ENCODE measurements at regions of chr11 and their contacts with region 1.

Region 1: DNA sequence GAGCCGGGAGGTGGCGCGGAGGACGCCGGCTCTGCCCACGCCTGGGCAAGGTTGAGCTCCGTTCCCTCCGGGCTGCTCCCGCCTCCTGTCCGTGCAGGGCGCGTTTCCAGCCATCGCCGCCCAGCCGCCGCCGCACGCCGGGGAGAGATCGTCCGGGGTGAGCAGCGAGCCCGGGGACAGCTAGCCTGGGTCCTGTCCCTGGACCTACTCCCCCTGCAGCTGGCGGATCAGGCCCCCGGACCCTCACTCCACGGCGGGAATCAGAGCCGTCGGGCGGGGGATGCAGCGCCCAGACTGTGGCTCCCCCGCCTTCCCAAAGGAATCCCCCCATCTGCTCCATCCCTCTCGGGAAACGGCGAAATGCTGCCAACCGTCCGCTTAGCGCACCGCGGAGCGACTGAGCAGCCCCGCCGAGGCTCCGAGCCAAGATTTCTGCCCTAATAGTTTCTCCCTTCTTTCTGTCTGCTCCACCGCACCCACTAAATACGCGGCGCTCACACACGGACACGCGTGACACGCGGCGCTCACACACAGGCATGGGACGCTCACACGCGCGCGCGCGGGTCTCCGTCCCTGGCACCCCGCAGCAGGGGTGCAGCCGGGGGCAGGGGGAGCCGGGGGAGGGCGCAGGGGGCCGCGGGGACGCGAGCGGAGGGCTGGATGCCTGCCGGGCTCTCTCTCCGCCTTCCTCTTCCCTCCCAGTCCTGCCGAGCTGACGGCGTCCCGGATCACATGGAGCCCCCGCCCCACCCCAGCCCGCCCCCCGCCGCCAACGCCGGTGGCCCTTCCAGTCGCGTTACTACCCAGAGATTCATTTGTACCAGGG is at the start of gene KCNJ5:
- DNase-seq: no peak
- CTCF ChIP-seq: no peak

Region 2: GRCh38 chr11:128905345-128906184 is 14.8 kb after region 1 on chr11:
- CTCF ChIA-PET with region 1: interaction called, 45 read pairs
- POLR2A ChIA-PET with region 1: no interaction called
- DNase-seq: peak; percentile 61
- CTCF ChIP-seq: peak; percentile 24

Region 3: DNA sequence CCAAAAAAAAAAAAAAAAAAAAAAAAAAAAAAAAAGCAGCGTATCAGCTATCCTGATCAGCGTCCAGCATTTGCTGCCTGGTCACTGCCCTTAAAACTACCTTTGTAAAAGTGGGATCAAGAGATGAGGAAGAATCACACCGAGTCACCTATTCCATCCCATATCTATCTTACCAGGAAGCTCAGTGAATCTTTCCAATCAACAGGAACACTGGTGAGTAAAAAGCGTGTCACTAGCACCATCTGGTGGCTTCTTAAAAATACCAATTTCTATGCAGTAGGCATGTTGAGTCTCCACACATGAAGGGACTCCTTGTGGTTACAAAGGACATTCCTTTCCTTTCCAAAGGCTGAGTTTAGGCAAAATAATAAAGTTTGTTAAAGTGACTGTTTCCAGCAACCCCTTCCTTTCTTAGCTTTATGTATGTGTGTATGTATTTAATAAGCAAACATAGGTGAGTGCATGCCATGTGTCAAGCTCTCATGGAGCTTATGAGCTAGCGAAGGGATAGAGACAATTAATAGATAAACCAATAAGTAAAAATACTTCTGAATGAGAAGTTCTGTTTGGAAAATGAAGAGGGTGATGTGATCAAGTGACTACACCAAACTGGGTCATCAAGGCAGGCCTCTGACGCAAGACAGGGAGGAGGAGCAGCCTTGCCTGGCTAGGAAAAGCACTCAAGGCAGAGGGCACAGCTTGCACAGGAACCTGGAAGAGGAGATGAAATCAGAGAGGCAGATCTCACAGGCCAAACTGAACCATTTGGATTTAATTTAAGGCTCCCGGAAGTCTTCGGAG is 65.8 kb after region 1 on chr11:
- CTCF ChIA-PET with region 1: interaction called, 198 read pairs
- POLR2A ChIA-PET with region 1: no interaction called
- DNase-seq: peak; percentile 59
- CTCF ChIP-seq: peak; percentile 39